ENCODE measurements at regions of chr20 and their contacts with region 1.

Region 1: DNA sequence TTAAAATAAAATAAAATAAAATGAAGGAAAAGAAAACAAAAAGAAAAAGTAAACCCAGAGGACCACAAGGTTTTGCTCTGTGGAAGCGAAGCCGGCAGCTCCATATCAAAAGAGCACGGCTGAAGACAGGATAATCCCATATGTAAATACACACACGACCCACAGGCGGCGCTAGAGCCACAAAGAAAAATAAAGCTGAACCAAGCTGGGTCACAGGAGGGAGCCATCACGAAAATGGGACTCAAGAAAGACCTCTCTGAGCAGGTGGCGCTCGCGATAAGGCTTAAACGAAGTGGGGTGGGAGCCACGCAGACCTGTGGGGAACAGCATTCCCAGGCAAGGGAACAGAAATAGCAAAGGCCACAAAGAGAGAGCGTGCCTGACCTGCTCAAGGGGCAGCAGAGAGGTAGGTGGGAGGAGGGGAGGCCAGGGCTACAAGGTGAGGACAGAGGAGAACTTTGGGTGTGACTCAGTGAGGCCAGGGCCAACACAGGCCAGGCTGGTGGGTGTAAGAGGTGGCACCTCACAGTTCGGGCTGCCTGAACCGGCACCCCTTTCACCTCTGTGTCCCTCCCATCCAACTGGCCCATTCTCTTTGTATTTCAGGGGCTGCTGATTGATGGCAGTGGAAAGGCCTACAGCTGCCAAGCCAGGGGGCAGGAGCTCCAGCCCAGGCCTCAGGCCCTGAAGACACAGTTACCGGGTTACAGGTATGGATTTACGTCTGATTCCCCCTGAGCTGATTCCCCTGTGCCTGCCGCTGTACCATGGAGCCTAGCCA is 26.0 kb downstream of the PTGIS start:
- DNase-seq: peak; percentile 72 to 82 (median 75)
- H3K4me3 ChIP-seq: no peak overlapping the region
- H3K27ac ChIP-seq: no peak overlapping the region
- H3K4me1 ChIP-seq: no peaks in the 10 kb centered on the region
- H3K27me3 ChIP-seq: peaks cover 0 to 12% (median 3%) of the 10 kb centered on the region in 5 experiments

Region 2: GRCh38 chr20:49557449-49557848 is 15.5 kb after region 1 on chr20:
- CTCF ChIA-PET with region 1: interaction called, 8 read pairs
- POLR2A ChIA-PET with region 1: interaction called, 10 read pairs
- DNase-seq: no peak
- H3K4me3 ChIP-seq: no peak overlapping the region
- H3K27ac ChIP-seq: no peak overlapping the region
- H3K4me1 ChIP-seq: no peaks in the 10 kb centered on the region
- H3K27me3 ChIP-seq: peaks cover 0 to 9% (median 2%) of the 10 kb centered on the region in 5 experiments

Region 3: GRCh38 chr20:49846206-49846807 is 304.4 kb after region 1 on chr20:
- CTCF ChIA-PET with region 1: interaction called, 13 read pairs
- POLR2A ChIA-PET with region 1: no interaction called
- DNase-seq: peak; percentile 50 to 67 (median 58)
- H3K4me3 ChIP-seq: no peak overlapping the region
- H3K27ac ChIP-seq: no peak overlapping the region
- H3K4me1 ChIP-seq: peaks cover 0 to 1% (median 0%) of the 10 kb centered on the region in 4 experiments
- H3K27me3 ChIP-seq: no peaks in the 10 kb centered on the region

Region 4: DNA sequence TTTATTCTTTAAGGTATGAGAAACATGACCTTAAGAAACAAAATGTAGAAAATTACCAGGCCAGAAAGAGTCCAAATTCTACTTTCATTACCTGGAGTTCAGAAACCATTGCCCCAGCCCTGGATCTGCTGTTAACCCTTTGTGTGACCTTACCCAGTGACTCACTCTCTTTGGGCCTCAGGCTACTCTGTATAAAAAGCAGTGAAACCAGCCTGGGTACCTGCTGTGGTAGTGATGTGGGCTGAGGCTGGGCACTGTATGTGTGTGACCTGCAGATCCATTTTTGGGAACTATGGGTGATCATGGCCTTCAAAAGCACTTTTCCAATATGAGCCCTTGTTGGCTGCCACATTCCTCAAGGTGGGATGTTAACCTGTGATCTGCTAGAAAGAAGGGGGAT is 317.9 kb after region 1 on chr20:
- CTCF ChIA-PET with region 1: no interaction called
- POLR2A ChIA-PET with region 1: no interaction called
- DNase-seq: no peak
- H3K4me3 ChIP-seq: no peak overlapping the region
- H3K27ac ChIP-seq: no peak overlapping the region
- H3K4me1 ChIP-seq: peaks cover 0 to 1% (median 0%) of the 10 kb centered on the region in 4 experiments
- H3K27me3 ChIP-seq: no peaks in the 10 kb centered on the region

Measured in common myeloid progenitor, CD34-positive (primary cell).